ENCODE measurements at regions of chr4 and their contacts with region 1.

Region 1: DNA sequence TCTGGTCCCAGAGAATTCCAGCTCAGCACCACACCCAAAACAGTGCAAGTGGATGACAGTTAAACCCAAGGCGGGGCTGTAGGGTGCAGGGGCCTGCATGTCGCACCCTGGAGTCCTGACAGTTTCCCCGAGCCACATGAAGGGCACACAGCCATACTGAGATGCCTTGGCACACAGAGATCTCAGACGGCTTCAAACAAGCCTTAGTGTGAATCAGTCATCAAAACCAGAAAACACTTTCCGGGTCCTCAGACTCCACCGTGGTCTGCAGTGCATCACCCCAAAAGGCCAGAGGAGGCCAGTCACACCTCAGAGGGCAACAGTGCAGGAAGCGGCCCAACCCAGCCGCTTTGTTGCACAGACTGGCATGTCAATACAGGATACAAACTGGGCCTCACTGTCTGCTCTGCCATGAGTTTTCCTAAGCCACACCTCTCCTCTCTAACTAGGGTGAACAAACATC is 64.6 kb upstream of the ENPP6 start:
- DNase-seq: peak; percentile 80
- ATAC-seq: peak; percentile 63
- H3K4me3 ChIP-seq: peak overlapping the region; percentile 25
- H3K27ac ChIP-seq: peak overlapping the region; percentile 99
- H3K4me1 ChIP-seq: peaks cover 69% of the 10 kb centered on the region
- H3K27me3 ChIP-seq: no peaks in the 10 kb centered on the region
- CTCF ChIP-seq: peak; percentile 50 to 70 (median 61)
- EP300 ChIP-seq: peak in 1 of 2 experiments; percentile 58; a peak in 2 of 4 replicates
- POLR2A ChIP-seq: peak; percentile 62
- RAD21 ChIP-seq: peak; percentile 69

Region 2: GRCh38 chr4:184039963-184040383 is 242.3 kb before region 1 on chr4:
- CTCF ChIA-PET with region 1: no interaction called
- POLR2A ChIA-PET with region 1: no interaction called
- RAD21 ChIA-PET with region 1: no interaction called
- SMC1A ChIA-PET with region 1: no interaction called
- in situ Hi-C with region 1: no loop called
- intact Hi-C with region 1: no loop called
- DNase-seq: no peak
- ATAC-seq: peak; percentile 35; the same call in 2 of the 3 replicates
- H3K4me3 ChIP-seq: no peak overlapping the region
- H3K27ac ChIP-seq: no peak overlapping the region
- H3K4me1 ChIP-seq: no peaks in the 10 kb centered on the region
- H3K27me3 ChIP-seq: peaks cover 3 to 8% of the 10 kb centered on the region in 2 experiments; a peak in 2 of 4 replicates
- CTCF ChIP-seq: no peak
- EP300 ChIP-seq: no peak
- POLR2A ChIP-seq: no peak
- RAD21 ChIP-seq: no peak

Region 3: GRCh38 chr4:184096561-184097240 is 185.6 kb before region 1 on chr4:
- CTCF ChIA-PET with region 1: no interaction called
- POLR2A ChIA-PET with region 1: no interaction called
- RAD21 ChIA-PET with region 1: no interaction called
- SMC1A ChIA-PET with region 1: no interaction called
- in situ Hi-C with region 1: no loop called
- intact Hi-C with region 1: no loop called
- DNase-seq: no peak
- ATAC-seq: no peak
- H3K4me3 ChIP-seq: no peak overlapping the region
- H3K27ac ChIP-seq: no peak overlapping the region
- H3K4me1 ChIP-seq: no peaks in the 10 kb centered on the region; the same call in none of the 2 replicates
- H3K27me3 ChIP-seq: peaks cover 0 to 1% of the 10 kb centered on the region in 2 experiments; a peak in 2 of 4 replicates
- CTCF ChIP-seq: no peak
- EP300 ChIP-seq: no peak
- POLR2A ChIP-seq: no peak
- RAD21 ChIP-seq: no peak

Region 4: GRCh38 chr4:184310171-184310567 is 27.9 kb after region 1 on chr4:
- CTCF ChIA-PET with region 1: interaction called, 83 read pairs
- POLR2A ChIA-PET with region 1: interaction called, 149 read pairs
- RAD21 ChIA-PET with region 1: interaction called, 149 read pairs
- SMC1A ChIA-PET with region 1: interaction called, 150 read pairs
- in situ Hi-C with region 1: no loop called
- intact Hi-C with region 1: loop called (anchors 1 kb)
- DNase-seq: no peak
- ATAC-seq: peak; percentile 61
- H3K4me3 ChIP-seq: peak overlapping the region; percentile 75; the same call in 1 of the 2 replicates
- H3K27ac ChIP-seq: peak overlapping the region; percentile 94
- H3K4me1 ChIP-seq: peaks cover 47% of the 10 kb centered on the region
- H3K27me3 ChIP-seq: no peaks in the 10 kb centered on the region
- CTCF ChIP-seq: peak; percentile 49 to 59 (median 49)
- EP300 ChIP-seq: no peak
- POLR2A ChIP-seq: peak; percentile 33; the same call in 1 of the 2 replicates
- RAD21 ChIP-seq: peak; percentile 65

Region 5: DNA sequence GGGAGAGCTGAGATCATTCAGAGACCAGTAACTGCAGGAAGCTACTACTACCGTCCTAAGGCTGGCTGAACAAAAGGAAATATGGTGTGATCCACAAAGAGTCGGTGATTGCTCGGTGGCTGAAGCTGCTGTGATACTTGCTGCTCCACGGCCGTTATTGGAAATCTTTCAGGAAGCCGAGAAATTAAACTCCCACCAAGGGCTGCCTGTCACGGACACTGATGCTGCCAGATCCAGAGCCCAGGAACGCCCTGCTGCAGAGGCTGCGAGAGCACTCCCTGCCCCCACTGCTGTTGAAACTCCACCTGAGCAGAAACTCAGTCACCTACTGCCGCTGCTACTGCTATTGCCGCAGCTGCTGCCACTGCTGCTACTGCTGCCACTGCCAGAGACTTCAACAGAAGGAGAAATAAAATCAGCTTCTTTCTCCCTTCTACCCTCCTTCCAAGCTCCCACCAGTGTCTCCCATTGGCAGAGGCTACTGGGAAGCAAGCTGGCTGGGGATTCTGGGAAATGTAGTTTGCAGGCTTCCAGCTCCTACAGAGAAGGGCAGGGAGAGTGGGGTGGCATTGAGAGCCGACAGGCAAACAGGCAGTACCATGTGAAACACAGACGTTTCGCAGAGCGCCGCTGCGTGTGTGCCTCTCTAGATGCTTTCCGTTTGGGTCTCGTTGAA is 61.4 kb after region 1 on chr4:
- CTCF ChIA-PET with region 1: interaction called, 40 read pairs
- POLR2A ChIA-PET with region 1: interaction called, 164 read pairs
- RAD21 ChIA-PET with region 1: interaction called, 193 read pairs
- SMC1A ChIA-PET with region 1: interaction called, 188 read pairs
- in situ Hi-C with region 1: loop called (anchors 5 kb)
- intact Hi-C with region 1: loop called (anchors 1 kb)
- DNase-seq: peak; percentile 69
- ATAC-seq: peak; percentile 51
- H3K4me3 ChIP-seq: peak overlapping the region; percentile 55
- H3K27ac ChIP-seq: peak overlapping the region; percentile 86
- H3K4me1 ChIP-seq: peaks cover 52% of the 10 kb centered on the region
- H3K27me3 ChIP-seq: no peaks in the 10 kb centered on the region
- CTCF ChIP-seq: no peak
- EP300 ChIP-seq: peak in 1 of 2 experiments; percentile 14; a peak in 1 of 4 replicates
- POLR2A ChIP-seq: peak; percentile 72
- RAD21 ChIP-seq: no peak

Region 6: DNA sequence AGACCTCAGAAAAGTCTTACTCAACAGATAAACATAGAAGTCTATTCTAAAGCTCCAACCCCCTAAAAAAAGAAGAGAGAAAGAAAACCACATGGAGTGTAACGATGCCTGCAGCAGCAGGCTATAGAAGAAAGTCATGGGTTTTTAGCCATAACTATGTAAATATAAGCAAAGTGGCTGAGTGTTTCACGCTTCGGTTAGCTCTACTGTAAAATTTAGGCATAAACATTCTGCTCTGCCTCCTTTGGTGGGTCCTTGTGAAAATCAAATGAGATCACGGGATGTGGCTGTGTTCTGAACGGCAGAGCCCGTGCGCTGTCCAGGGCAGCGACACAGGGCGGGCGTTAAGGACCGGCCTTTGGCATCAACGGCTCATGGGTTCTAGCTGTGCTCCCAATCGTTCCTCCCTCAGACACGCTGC is 113.7 kb after region 1 on chr4:
- CTCF ChIA-PET with region 1: no interaction called
- POLR2A ChIA-PET with region 1: interaction called, 3 read pairs
- RAD21 ChIA-PET with region 1: no interaction called
- SMC1A ChIA-PET with region 1: no interaction called
- in situ Hi-C with region 1: no loop called
- intact Hi-C with region 1: loop called (anchors 5 kb)
- DNase-seq: peak; percentile 81
- ATAC-seq: peak; percentile 89
- H3K4me3 ChIP-seq: peak overlapping the region; percentile 29
- H3K27ac ChIP-seq: peak overlapping the region; percentile 76
- H3K4me1 ChIP-seq: peaks cover 29% of the 10 kb centered on the region
- H3K27me3 ChIP-seq: no peaks in the 10 kb centered on the region
- CTCF ChIP-seq: no peak
- EP300 ChIP-seq: no peak
- POLR2A ChIP-seq: peak; percentile 63; the same call in 1 of the 2 replicates
- RAD21 ChIP-seq: no peak

Region 7: GRCh38 chr4:184514121-184514988 is 232.1 kb after region 1 on chr4:
- CTCF ChIA-PET with region 1: interaction called, 9 read pairs
- POLR2A ChIA-PET with region 1: interaction called, 9 read pairs
- RAD21 ChIA-PET with region 1: interaction called, 7 read pairs
- SMC1A ChIA-PET with region 1: interaction called, 28 read pairs
- in situ Hi-C with region 1: no loop called
- intact Hi-C with region 1: no loop called
- DNase-seq: peak; percentile 94
- ATAC-seq: peak; percentile 96
- H3K4me3 ChIP-seq: peak overlapping the region; percentile 42
- H3K27ac ChIP-seq: peak overlapping the region; percentile 70
- H3K4me1 ChIP-seq: peaks cover 32% of the 10 kb centered on the region
- H3K27me3 ChIP-seq: no peaks in the 10 kb centered on the region
- CTCF ChIP-seq: no peak
- EP300 ChIP-seq: peak; percentile 99 to 100
- POLR2A ChIP-seq: 0 out of 2 replicates have a peak, but pooled peaks have one; percentile 30
- RAD21 ChIP-seq: no peak

Region 8: GRCh38 chr4:184815046-184815877 is 533.0 kb after region 1 on chr4:
- CTCF ChIA-PET with region 1: no interaction called
- POLR2A ChIA-PET with region 1: no interaction called
- RAD21 ChIA-PET with region 1: no interaction called
- SMC1A ChIA-PET with region 1: no interaction called
- in situ Hi-C with region 1: no loop called
- intact Hi-C with region 1: loop called (anchors 10 kb)
- DNase-seq: peak; percentile 89
- ATAC-seq: peak; percentile 75
- H3K4me3 ChIP-seq: peak overlapping the region; percentile 58
- H3K27ac ChIP-seq: peak overlapping the region; percentile 83
- H3K4me1 ChIP-seq: peaks cover 64% of the 10 kb centered on the region
- H3K27me3 ChIP-seq: no peaks in the 10 kb centered on the region
- CTCF ChIP-seq: no peak
- EP300 ChIP-seq: 0 out of 4 replicates have a peak, but pooled peaks of 1 of the 2 experiments have one; percentile 14
- POLR2A ChIP-seq: peak; percentile 68
- RAD21 ChIP-seq: no peak